ENCODE measurements at regions of chr11 and their contacts with region 1.

Region 1: DNA sequence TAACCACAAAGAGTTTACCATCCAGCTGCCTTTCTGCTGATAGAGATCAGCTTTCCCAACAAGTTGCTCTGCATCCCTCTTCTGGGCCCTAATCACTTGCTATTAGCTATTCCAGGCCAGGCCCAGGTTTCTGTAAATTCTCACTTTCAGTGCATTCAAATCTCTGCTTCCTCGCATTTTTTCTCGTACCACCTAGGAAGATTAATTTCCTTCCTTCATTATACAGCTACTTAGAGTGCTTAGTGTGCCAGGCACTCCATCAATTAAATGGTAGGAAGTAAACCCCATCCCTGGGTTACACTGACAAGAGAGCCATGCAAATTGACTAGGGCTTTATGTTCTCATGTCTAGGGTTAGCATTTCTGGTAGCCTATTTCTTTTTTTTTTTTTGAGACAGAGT is 9.7 kb downstream of the SIAE start:
- DNase-seq: no peak
- ATAC-seq: no peak
- H3K4me3 Mint-ChIP-seq: no peak overlapping the region
- H3K27ac Mint-ChIP-seq: no peak overlapping the region
- H3K4me1 Mint-ChIP-seq: no peaks in the 10 kb centered on the region
- H3K27me3 Mint-ChIP-seq: no peaks in the 10 kb centered on the region

Region 2: GRCh38 chr11:124123622-124124021 is 540.2 kb before region 1 on chr11:
- CTCF ChIA-PET with region 1: no interaction called
- DNase-seq: no peak
- ATAC-seq: no peak
- H3K4me3 Mint-ChIP-seq: no peak overlapping the region
- H3K27ac Mint-ChIP-seq: no peak overlapping the region
- H3K4me1 Mint-ChIP-seq: no peaks in the 10 kb centered on the region
- H3K27me3 Mint-ChIP-seq: no peaks in the 10 kb centered on the region

Region 3: GRCh38 chr11:124644426-124645280 is 19.2 kb before region 1 on chr11:
- CTCF ChIA-PET with region 1: interaction called, 14 read pairs
- DNase-seq: no peak
- ATAC-seq: peak; percentile 60
- H3K4me3 Mint-ChIP-seq: no peak overlapping the region
- H3K27ac Mint-ChIP-seq: no peak overlapping the region
- H3K4me1 Mint-ChIP-seq: peaks cover 2% of the 10 kb centered on the region
- H3K27me3 Mint-ChIP-seq: no peaks in the 10 kb centered on the region

Region 4: DNA sequence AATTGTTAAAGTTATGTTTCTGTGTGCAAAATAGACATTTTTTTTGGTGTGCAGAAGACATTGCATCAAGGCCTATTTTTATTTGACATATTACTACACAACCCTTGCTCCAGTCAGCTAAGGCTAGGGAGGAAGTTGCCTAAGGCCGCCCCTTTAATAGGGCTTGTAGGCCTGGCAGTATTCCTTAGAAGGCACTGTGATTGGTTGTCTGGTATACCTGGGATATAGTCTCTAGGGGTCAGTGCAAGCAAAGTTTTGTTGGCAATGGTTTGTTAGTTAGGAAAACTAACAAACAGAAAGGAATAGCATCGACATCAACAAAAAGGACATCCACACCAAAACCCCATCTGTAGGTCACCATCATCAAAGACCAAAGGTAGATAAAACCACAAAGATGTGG is 307.1 kb after region 1 on chr11:
- CTCF ChIA-PET with region 1: no interaction called
- DNase-seq: no peak
- ATAC-seq: no peak
- H3K4me3 Mint-ChIP-seq: no peak overlapping the region
- H3K27ac Mint-ChIP-seq: no peak overlapping the region
- H3K4me1 Mint-ChIP-seq: no peaks in the 10 kb centered on the region
- H3K27me3 Mint-ChIP-seq: no peaks in the 10 kb centered on the region